BJ (cell line): ENCODE measurements at regions of chr2 and their contacts with region 1.

Region 1: DNA sequence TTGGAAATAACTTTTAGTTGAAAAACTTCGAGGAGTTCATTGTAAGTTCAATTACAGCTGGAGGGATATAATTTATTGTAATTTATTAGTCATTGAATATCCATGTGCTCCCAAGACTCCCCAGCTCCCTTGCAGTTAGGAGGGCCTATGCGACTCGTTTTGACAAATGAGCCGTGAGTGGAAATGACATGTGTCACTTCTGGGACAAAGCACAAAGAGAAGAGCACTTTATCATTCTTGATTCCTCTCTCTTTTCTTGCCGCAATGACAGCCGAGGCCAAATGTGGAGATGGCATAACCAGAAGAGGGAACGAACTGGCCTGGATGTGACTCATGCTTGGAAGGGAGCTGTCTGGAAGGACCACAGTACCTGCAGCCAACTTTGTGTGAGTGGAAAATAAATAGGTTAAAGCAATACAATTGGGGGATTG is 44.2 kb upstream of the ITSN2 start:
- DNase-seq: no peak
- H3K4me3 ChIP-seq: no peak overlapping the region
- H3K27me3 ChIP-seq: peaks cover 2% of the 10 kb centered on the region; the same call in 1 of the 2 replicates
- CTCF ChIP-seq: no peak

Region 2: DNA sequence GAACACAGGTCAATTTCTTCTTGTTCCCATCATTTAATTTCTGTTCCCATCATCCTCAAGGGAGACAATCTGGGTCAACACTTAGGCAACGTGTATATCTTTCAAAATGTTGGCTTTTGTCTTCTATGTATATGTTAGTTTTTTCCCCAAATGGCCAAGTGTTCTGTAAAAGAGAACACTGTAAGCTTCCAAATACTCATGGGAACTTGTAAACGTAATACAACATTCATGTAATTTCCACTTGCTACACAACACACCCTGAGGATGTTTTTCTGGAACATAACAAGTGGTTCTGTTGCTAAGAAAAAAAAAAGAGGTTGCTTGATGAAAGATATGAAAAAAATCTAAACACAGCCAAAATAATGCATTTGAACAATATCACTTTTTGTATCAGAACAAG is 626.7 kb before region 1 on chr2:
- CTCF ChIA-PET with region 1: no interaction called
- POLR2A ChIA-PET with region 1: no interaction called
- DNase-seq: no peak
- H3K4me3 ChIP-seq: no peak overlapping the region
- H3K27me3 ChIP-seq: no peaks in the 10 kb centered on the region
- CTCF ChIP-seq: no peak

Region 3: GRCh38 chr2:24435391-24436316 is 31.1 kb after region 1 on chr2:
- CTCF ChIA-PET with region 1: interaction called, 6 read pairs
- POLR2A ChIA-PET with region 1: interaction called, 12 read pairs
- DNase-seq: no peak
- H3K4me3 ChIP-seq: no peak overlapping the region
- H3K27me3 ChIP-seq: no peaks in the 10 kb centered on the region
- CTCF ChIP-seq: no peak